WTC11 (cell line): ENCODE measurements at regions of chr10 and their contacts with region 1.

Region 1: DNA sequence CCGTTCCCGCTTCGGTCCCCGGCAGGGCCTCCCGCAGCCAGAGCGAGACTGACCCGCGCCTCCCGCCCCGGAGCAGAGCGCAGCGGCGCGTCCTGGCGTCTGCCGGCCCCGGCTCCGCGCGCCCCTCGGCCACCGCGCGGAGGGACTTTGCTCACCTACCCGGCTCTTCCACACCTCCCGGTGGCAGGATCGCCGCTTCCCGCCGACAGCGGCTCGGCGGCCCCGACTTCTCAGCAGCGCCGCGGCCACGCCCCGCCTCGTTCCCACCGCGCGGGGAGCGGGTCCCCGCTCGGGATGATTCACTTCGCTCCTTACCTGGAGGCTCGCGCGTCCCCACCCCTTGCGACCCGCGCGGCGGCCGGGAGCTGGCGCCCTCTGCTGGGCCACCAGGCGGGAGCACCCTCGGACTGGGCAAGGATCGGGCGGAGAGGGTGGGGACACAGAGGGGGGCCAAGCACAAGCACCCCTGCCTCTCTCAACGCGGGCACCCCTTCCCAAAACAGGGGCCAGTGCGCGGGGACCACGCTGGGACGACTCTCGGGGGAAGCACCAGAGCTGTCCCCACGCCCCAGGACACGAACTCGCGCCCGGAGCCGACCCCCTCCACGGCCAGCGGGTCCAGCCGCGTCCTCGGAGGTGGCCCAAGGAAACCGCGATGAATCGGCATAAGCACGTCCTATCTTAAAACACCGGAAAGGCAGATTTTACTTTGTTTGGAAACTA is 101.0 kb upstream of the SVIL start:
- DNase-seq: peak; percentile 85
- ATAC-seq: peak; percentile 71
- H3K4me3 Mint-ChIP-seq: peak overlapping the region; percentile 71
- H3K27ac Mint-ChIP-seq: no peak overlapping the region
- H3K4me1 Mint-ChIP-seq: peaks cover 45% of the 10 kb centered on the region
- H3K27me3 Mint-ChIP-seq: peaks cover 35% of the 10 kb centered on the region
- CTCF ChIP-seq: peak; percentile 75

Region 2: GRCh38 chr10:29635711-29636144 is 100.0 kb before region 1 on chr10:
- CTCF ChIA-PET with region 1: interaction called, 21 read pairs
- POLR2A ChIA-PET with region 1: no interaction called
- DNase-seq: peak; percentile 43
- ATAC-seq: peak; percentile 62
- H3K4me3 Mint-ChIP-seq: peak overlapping the region; percentile 34; the same call in 1 of the 2 replicates
- H3K27ac Mint-ChIP-seq: peak overlapping the region; percentile 90
- H3K4me1 Mint-ChIP-seq: peaks cover 48% of the 10 kb centered on the region
- H3K27me3 Mint-ChIP-seq: no peaks in the 10 kb centered on the region
- CTCF ChIP-seq: no peak

Region 3: GRCh38 chr10:29795850-29796249 is 60.1 kb after region 1 on chr10:
- CTCF ChIA-PET with region 1: no interaction called
- POLR2A ChIA-PET with region 1: no interaction called
- DNase-seq: no peak
- ATAC-seq: no peak
- H3K4me3 Mint-ChIP-seq: no peak overlapping the region
- H3K27ac Mint-ChIP-seq: no peak overlapping the region
- H3K4me1 Mint-ChIP-seq: no peaks in the 10 kb centered on the region
- H3K27me3 Mint-ChIP-seq: no peaks in the 10 kb centered on the region
- CTCF ChIP-seq: no peak